Endothelial cell of umbilical vein (primary cell): ENCODE measurements at regions of chr12 and their contacts with region 1.

Region 1: DNA sequence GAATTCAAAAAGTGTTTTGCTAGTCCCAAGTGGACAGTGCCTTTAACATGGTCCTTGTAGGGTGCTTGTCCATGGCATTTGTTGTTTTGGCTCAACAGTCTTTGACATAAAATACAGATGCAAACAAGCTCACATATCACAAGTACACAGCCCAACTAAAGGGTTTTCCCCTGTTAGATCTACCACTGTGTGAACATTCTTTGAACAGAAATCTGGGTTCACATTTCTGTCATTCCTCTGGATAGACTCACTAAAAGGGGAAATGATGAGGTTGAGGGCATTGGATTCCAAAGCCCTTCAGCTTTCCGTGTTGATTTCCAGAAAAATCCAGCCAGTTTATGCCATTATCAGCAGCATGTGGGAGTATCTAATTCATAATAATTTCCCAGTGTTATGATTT is 54.1 kb downstream of the EP400 start:
- DNase-seq: peak; percentile 62
- H3K4me3 ChIP-seq: no peak overlapping the region
- H3K27ac ChIP-seq: peak overlapping the region; percentile 76
- H3K4me1 ChIP-seq: peaks cover 8% of the 10 kb centered on the region
- H3K27me3 ChIP-seq: no peaks in the 10 kb centered on the region
- CTCF ChIP-seq: no peak
- POLR2A ChIP-seq: no peak

Region 2: GRCh38 chr12:131836193-131836592 is 167.7 kb before region 1 on chr12:
- CTCF ChIA-PET with region 1: interaction called, 26 read pairs
- POLR2A ChIA-PET with region 1: no interaction called
- dilution Hi-C with region 1: no loop called
- intact Hi-C with region 1: loop called (anchors 1 kb)
- DNase-seq: peak; percentile 22
- H3K4me3 ChIP-seq: no peak overlapping the region
- H3K27ac ChIP-seq: no peak overlapping the region
- H3K4me1 ChIP-seq: no peaks in the 10 kb centered on the region
- H3K27me3 ChIP-seq: peaks cover 0 to 2% of the 10 kb centered on the region in 2 experiments
- CTCF ChIP-seq: peak; percentile 16 to 47
- POLR2A ChIP-seq: no peak

Region 3: DNA sequence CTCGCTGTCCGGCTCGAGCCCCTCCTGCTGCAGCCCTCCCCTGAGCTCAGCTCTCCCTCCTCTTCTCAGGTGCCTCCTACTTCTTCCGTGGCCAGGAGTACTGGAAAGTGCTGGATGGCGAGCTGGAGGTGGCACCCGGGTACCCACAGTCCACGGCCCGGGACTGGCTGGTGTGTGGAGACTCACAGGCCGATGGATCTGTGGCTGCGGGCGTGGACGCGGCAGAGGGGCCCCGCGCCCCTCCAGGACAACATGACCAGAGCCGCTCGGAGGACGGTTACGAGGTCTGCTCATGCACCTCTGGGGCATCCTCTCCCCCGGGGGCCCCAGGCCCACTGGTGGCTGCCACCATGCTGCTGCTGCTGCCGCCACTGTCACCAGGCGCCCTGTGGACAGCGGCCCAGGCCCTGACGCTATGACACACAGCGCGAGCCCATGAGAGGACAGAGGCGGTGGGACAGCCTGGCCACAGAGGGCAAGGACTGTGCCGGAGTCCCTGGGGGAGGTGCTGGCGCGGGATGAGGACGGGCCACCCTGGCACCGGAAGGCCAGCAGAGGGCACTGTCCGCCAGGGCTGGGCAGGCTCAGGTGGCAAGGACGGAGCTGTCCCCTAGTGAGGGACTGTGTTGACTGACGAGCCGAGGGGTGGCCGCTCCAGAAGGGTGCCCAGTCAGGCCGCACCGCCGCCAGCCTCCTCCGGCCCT is 152.8 kb before region 1 on chr12:
- CTCF ChIA-PET with region 1: interaction called, 8 read pairs
- POLR2A ChIA-PET with region 1: no interaction called
- dilution Hi-C with region 1: no loop called
- intact Hi-C with region 1: loop called (anchors 1 kb)
- DNase-seq: no peak
- H3K4me3 ChIP-seq: no peak overlapping the region
- H3K27ac ChIP-seq: no peak overlapping the region
- H3K4me1 ChIP-seq: no peaks in the 10 kb centered on the region
- H3K27me3 ChIP-seq: no peaks in the 10 kb centered on the region
- CTCF ChIP-seq: no peak
- POLR2A ChIP-seq: no peak

Region 4: DNA sequence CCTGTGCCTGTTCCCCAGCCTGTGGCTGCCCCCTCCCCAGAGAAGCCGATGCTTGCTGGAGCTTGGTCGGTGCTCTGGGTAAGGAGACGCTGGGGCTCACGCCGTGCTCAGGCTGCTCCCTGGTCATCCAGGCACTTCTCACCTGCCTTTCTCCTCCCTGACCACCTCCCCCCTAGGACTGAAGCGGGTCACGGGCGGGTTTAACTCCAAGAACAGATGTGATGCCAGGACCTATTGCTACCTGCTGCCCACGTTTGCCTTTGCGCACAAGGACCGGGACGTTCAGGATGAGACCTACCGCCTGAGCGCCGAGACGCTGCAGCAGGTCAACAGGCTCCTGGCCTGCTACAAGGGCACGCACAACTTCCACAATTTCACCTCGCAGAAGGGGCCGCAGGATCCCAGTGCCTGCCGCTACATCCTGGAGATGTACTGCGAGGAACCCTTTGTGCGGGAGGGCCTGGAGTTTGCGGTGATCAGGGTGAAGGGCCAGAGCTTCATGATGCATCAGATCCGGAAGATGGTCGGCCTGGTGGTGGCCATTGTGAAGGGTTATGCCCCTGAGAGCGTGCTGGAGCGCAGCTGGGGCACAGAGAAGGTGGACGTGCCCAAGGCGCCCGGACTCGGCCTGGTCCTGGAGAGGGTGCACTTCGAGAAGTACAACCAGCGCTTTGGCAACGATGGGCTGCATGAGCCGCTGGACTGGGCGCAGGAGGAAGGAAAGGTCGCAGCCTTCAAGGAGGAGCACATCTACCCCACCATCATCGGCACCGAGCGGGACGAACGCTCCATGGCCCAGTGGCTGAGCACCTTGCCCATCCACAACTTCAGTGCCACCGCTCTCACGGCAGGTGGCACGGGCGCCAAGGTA is 62.5 kb before region 1 on chr12:
- CTCF ChIA-PET with region 1: no interaction called
- POLR2A ChIA-PET with region 1: no interaction called
- dilution Hi-C with region 1: no loop called
- intact Hi-C with region 1: no loop called
- DNase-seq: no peak
- H3K4me3 ChIP-seq: no peak overlapping the region
- H3K27ac ChIP-seq: no peak overlapping the region
- H3K4me1 ChIP-seq: no peaks in the 10 kb centered on the region
- H3K27me3 ChIP-seq: no peaks in the 10 kb centered on the region
- CTCF ChIP-seq: no peak
- POLR2A ChIP-seq: no peak